Dorsolateral prefrontal cortex (tissue), 120 donors: ENCODE measurements at regions of chrX and their contacts with region 1.

Region 1: DNA sequence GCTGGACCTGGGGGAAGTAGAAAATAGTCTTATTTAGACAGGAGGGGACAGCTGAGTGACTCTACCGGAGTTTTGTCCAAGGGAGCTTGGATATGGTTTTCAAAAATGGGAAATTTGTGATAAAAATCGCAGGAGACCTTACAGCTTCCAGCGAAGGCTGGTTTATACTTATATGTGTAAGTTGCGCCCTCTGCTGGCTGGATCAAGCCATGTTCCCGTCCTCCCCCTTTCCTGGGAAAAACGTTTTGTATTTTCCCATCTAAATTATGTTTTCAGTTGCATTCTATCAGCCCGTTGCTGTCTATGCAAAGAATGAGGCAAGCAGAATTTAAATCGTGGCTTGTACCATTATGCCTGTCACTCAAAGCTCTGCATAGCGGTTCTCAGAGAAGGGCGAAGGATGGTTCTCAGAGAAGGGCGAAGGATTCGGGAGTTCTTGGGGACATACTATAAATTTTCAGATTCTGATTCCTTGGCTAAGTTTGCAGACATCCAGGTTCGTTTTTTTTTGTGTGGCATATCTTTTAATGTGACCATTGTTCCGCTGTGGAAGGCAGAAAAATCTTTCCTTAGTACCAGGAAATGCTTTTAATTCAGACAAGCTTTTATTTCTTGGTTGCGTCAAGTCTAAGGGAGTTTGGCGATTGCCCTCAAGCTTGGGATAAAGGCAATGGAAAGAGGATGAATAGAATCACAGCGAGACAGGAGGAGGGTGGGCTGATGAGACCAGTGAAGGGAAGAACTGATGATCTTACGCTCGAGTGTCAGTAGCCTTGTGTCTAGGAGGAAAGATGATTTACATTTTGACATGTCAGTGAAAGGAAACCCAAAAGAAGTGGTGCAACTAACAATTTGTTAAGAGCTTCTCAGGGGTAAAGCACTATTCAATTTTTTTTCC is 128.5 kb upstream of the ARX start:
- DNase-seq: peak; percentile 42 to 77 (median 51)
- H3K4me3 ChIP-seq: peak overlapping the region in 49 of 59 donors; percentile 1 to 54 (median 32)
- H3K27ac ChIP-seq: peak overlapping the region in 7 of 59 donors; percentile 8 to 51 (median 26)
- H3K27me3 ChIP-seq: peaks cover 0 to 80% (median 19%) of the 10 kb centered on the region in 45 donors
- CTCF ChIP-seq: peak; percentile 49 to 92 (median 78)

Region 2: GRCh38 chrX:24371391-24371972 is 772.8 kb before region 1 on chrX:
- intact Hi-C with region 1: loop called in 1 of 2 experiments (anchors 5 kb)
- DNase-seq: peak in 6 of 10 donors; percentile 32 to 62 (median 42)
- H3K4me3 ChIP-seq: peak overlapping the region in 11 of 59 donors; percentile 3 to 30 (median 17)
- H3K27ac ChIP-seq: no peak overlapping the region
- H3K27me3 ChIP-seq: peaks cover 0 to 62% (median 28%) of the 10 kb centered on the region in 45 donors
- CTCF ChIP-seq: peak in 54 of 56 donors; percentile 32 to 71 (median 58)

Region 3: DNA sequence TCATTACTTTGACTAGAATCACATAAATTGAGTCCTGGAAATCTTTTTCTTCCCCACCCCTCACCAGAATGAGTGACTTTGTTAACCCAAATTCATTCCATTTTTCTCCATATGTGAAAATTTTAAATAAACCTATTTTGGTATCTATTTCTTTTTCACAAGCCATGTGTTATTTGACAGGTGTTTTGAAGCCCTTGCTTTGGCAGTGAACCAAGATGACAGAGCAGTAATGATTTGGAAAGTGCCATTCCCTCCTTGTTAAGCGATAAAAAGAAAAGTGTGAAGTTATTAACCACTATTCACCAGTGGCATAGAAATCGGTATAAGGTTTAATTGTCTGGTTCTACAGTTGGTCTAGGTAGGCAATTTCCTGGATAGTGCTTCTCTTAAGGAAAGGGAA is 384.5 kb before region 1 on chrX:
- intact Hi-C with region 1: loop called in 1 of 2 experiments (anchors 5 kb)
- DNase-seq: no peak
- H3K4me3 ChIP-seq: no peak overlapping the region
- H3K27ac ChIP-seq: no peak overlapping the region
- H3K27me3 ChIP-seq: peaks cover 0 to 50% (median 6%) of the 10 kb centered on the region in 45 donors
- CTCF ChIP-seq: no peak

Region 4: GRCh38 chrX:24838629-24839028 is 305.7 kb before region 1 on chrX:
- intact Hi-C with region 1: loop called (anchors 5 kb)
- DNase-seq: no peak
- H3K4me3 ChIP-seq: no peak overlapping the region
- H3K27ac ChIP-seq: no peak overlapping the region
- H3K27me3 ChIP-seq: peaks cover 0 to 51% (median 3%) of the 10 kb centered on the region in 45 donors
- CTCF ChIP-seq: peak; percentile 40 to 81 (median 66)

Region 5: DNA sequence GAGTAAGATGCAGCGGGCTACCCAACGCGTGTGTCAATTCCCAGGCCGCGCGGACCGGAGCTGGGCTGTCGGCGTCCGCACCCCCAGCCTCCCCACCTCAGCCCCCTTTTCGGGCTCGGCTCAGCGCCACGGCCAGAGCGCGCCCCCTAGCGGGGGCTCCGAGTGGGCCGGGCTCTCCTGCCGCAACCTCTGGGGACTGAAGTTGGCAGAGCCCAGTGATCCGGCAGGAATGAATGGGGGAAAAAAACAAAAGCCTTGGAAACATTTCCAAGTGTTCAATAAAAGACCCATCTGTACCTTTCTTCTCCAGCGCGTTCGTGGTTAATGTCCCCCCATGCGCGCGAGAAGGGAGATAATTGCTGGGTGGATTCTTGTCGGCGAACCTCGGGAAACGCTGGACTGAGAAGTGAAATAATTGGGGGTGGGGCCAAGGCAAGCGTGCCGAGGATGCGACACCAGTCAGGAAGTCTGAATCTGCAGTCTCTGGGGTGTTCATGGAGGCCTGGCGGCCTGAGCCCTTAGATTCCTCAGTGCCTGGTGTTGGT is 123.3 kb before region 1 on chrX:
- intact Hi-C with region 1: loop called in 1 of 2 experiments (anchors 5 kb)
- DNase-seq: no peak
- H3K4me3 ChIP-seq: peak overlapping the region in 34 of 59 donors; percentile 5 to 51 (median 32)
- H3K27ac ChIP-seq: no peak overlapping the region
- H3K27me3 ChIP-seq: peaks cover 0 to 100% (median 94%) of the 10 kb centered on the region in 45 donors
- CTCF ChIP-seq: peak in 54 of 56 donors; percentile 20 to 62 (median 45)